ENCODE measurements at regions of chr4 and their contacts with region 1.

Region 1: DNA sequence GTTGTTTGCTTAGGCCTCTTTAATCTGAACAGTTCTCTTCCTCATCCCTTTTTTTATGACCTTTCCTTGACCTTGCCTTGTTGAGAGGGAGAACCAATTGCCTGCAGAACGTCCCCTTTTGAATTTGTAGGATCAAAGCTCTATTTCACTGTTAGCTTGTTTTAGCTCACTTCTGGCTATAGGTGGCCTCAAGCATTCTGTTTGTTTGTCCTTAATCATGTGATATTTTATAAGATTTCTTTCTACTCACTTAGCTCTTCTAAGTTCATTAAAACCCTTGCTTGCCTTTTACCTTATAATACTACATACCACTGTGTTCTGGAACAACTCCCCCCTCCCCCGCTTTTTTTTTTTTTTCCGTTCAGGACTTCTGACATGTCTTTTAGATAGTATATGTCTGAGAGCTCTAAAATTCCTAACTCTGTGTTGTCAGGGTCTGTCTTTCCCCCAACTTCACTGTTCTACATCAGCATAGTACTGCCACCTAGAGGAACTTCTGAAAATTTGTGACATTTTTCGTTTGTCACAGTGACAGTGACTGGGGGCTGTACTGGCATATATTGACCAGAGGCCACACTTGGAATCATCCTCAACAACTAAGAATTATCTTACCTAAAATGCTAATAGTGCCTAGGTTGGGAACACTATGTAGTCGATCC is 128.5 kb downstream of the LARP7 start:
- DNase-seq: peak; percentile 7
- ATAC-seq: peak; percentile 91
- H3K4me3 ChIP-seq: no peak overlapping the region
- H3K27ac ChIP-seq: no peak overlapping the region
- H3K4me1 ChIP-seq: no peaks in the 10 kb centered on the region; the same call in 1 of the 2 replicates
- H3K27me3 ChIP-seq: no peaks in the 10 kb centered on the region
- CTCF ChIP-seq: peak; percentile 49 to 58 (median 56); a peak in 5 of 6 replicates
- EP300 ChIP-seq: no peak
- POLR2A ChIP-seq: no peak
- RAD21 ChIP-seq: peak; percentile 67

Region 2: DNA sequence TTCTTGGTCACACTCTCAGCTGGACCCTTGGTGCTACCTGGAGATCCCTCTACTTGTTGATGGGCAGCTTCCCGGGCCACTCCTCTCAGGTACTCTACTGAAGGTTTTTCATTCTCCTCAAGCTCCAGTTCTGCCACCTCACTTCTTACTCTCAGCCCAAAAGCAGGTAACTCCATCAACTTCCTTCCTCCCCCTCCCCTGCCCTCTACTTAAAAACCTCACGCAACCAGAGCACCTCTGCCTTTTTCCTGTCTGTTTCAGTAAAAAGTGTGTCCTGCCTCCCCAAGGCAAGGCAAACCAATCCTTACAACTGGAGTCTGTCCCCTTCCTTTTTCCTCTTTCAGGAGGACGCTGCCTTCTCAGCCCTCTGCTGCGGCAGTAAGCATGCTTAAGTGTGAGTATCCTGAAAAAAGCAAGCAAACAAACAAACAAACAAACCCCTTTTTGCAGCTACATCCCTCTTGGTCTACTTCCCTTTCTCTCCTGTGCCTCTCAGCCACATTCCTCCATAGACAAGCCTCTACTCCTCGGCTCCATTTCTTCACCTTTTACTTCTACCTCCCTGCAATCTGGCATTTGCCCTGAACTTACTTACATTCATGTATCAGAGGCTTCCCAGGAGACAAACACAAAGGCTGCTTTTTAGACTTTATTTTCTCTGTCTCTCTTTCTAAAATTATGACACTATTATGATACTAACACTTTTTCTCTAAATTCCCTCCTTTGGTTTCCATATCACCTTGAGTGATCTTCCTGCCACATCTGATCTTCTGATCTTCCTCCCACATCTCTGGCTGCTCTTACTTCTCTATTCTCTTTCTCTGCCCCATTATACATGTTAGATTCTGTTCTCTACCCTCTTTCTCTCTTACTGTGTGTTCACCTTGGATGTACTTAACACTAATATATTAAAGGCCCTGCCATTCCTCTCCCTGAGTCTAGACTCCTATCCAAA is 462.8 kb before region 1 on chr4:
- CTCF ChIA-PET with region 1: no interaction called
- POLR2A ChIA-PET with region 1: no interaction called
- RAD21 ChIA-PET with region 1: no interaction called
- SMC1A ChIA-PET with region 1: no interaction called
- in situ Hi-C with region 1: no loop called
- intact Hi-C with region 1: no loop called
- DNase-seq: no peak
- ATAC-seq: peak; percentile 83
- H3K4me3 ChIP-seq: no peak overlapping the region; the same call in 1 of the 2 replicates
- H3K27ac ChIP-seq: peak overlapping the region; percentile 67
- H3K4me1 ChIP-seq: peaks cover 17% of the 10 kb centered on the region
- H3K27me3 ChIP-seq: no peaks in the 10 kb centered on the region
- CTCF ChIP-seq: no peak
- EP300 ChIP-seq: no peak
- POLR2A ChIP-seq: no peak
- RAD21 ChIP-seq: no peak

Region 3: GRCh38 chr4:112321776-112322684 is 443.4 kb before region 1 on chr4:
- CTCF ChIA-PET with region 1: interaction called, 22 read pairs
- POLR2A ChIA-PET with region 1: no interaction called
- RAD21 ChIA-PET with region 1: no interaction called
- SMC1A ChIA-PET with region 1: interaction called, 9 read pairs
- in situ Hi-C with region 1: loop called (anchors 5 kb)
- intact Hi-C with region 1: no loop called
- DNase-seq: no peak
- ATAC-seq: peak; percentile 44
- H3K4me3 ChIP-seq: no peak overlapping the region
- H3K27ac ChIP-seq: no peak overlapping the region
- H3K4me1 ChIP-seq: peaks cover 29% of the 10 kb centered on the region
- H3K27me3 ChIP-seq: no peaks in the 10 kb centered on the region
- CTCF ChIP-seq: peak; percentile 76 to 87 (median 77)
- EP300 ChIP-seq: no peak
- POLR2A ChIP-seq: no peak
- RAD21 ChIP-seq: peak; percentile 80

Region 4: GRCh38 chr4:112636688-112637551 is 128.5 kb before region 1 on chr4 and contains the starts of genes LARP7 and ZGRF1:
- CTCF ChIA-PET with region 1: interaction called, 205 read pairs
- POLR2A ChIA-PET with region 1: no interaction called
- RAD21 ChIA-PET with region 1: interaction called, 15 read pairs
- SMC1A ChIA-PET with region 1: interaction called, 46 read pairs
- in situ Hi-C with region 1: loop called (anchors 5 kb)
- intact Hi-C with region 1: loop called (anchors 1 kb)
- DNase-seq: peak; percentile 96
- ATAC-seq: peak; percentile 94
- H3K4me3 ChIP-seq: peak within 1 kb of the TSS; percentile 87
- H3K27ac ChIP-seq: peak within 1 kb of the TSS; percentile 98
- H3K4me1 ChIP-seq: peaks cover 20% of the 10 kb centered on the region
- H3K27me3 ChIP-seq: no peaks in the 10 kb centered on the region
- CTCF ChIP-seq: peak; percentile 86 to 96 (median 95)
- EP300 ChIP-seq: peak in 1 of 2 experiments; percentile 32; a peak in 2 of 4 replicates
- POLR2A ChIP-seq: peak; percentile 77
- RAD21 ChIP-seq: peak; percentile 50
- polyA plus RNA-seq, gene LARP7: 79.0 to 107 TPM
- polyA plus RNA-seq, gene ZGRF1: 8.5 to 9.0 TPM

Region 5: DNA sequence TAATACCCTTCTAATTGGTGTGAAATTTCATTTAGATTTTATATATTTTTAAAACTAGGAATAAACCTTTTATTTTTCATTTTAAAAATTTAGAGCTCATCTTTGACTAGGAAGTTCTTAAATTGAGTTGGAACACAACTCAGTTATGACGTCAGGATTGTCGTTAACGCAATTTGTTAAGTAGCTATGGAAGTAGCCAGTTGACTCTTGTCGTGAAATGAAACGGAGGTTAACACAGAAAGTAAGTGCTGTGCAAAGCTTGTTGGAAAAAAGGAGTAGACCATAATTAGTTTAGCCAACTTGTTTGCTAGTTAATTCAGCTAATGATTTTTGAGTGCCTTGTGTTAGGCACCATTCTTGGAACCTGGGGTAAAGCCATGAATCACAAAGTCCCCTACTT is 110.2 kb before region 1 on chr4:
- CTCF ChIA-PET with region 1: interaction called, 21 read pairs
- POLR2A ChIA-PET with region 1: no interaction called
- RAD21 ChIA-PET with region 1: interaction called, 4 read pairs
- SMC1A ChIA-PET with region 1: interaction called, 6 read pairs
- in situ Hi-C with region 1: no loop called
- intact Hi-C with region 1: no loop called
- DNase-seq: no peak
- ATAC-seq: no peak
- H3K4me3 ChIP-seq: no peak overlapping the region
- H3K27ac ChIP-seq: no peak overlapping the region
- H3K4me1 ChIP-seq: no peaks in the 10 kb centered on the region
- H3K27me3 ChIP-seq: no peaks in the 10 kb centered on the region
- CTCF ChIP-seq: no peak
- EP300 ChIP-seq: no peak
- POLR2A ChIP-seq: no peak
- RAD21 ChIP-seq: no peak

Region 6: DNA sequence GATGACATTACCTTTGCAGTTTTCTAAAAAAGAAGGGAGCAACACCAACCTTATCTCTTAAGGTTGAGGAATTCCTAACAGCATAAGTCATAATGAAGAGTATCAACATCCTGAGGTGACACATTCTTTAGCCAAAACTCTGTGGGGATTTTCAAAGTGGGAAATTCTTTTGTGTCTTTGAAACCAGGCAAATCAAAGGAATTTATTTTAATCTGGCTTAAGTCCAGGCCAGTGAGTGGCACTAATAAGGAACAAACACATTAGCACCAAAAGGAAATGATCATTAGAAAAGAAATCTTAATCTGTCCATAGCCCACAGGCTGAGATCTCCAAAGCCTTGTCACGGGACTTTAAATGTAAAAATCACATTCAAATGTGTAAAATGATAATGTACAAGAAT is 18.4 kb before region 1 on chr4:
- CTCF ChIA-PET with region 1: interaction called, 22 read pairs
- POLR2A ChIA-PET with region 1: no interaction called
- RAD21 ChIA-PET with region 1: interaction called, 7 read pairs
- SMC1A ChIA-PET with region 1: interaction called, 4 read pairs
- in situ Hi-C with region 1: no loop called
- intact Hi-C with region 1: no loop called
- DNase-seq: no peak
- ATAC-seq: no peak
- H3K4me3 ChIP-seq: no peak overlapping the region
- H3K27ac ChIP-seq: no peak overlapping the region
- H3K4me1 ChIP-seq: no peaks in the 10 kb centered on the region
- H3K27me3 ChIP-seq: no peaks in the 10 kb centered on the region
- CTCF ChIP-seq: no peak
- EP300 ChIP-seq: no peak
- POLR2A ChIP-seq: no peak
- RAD21 ChIP-seq: no peak

Region 7: DNA sequence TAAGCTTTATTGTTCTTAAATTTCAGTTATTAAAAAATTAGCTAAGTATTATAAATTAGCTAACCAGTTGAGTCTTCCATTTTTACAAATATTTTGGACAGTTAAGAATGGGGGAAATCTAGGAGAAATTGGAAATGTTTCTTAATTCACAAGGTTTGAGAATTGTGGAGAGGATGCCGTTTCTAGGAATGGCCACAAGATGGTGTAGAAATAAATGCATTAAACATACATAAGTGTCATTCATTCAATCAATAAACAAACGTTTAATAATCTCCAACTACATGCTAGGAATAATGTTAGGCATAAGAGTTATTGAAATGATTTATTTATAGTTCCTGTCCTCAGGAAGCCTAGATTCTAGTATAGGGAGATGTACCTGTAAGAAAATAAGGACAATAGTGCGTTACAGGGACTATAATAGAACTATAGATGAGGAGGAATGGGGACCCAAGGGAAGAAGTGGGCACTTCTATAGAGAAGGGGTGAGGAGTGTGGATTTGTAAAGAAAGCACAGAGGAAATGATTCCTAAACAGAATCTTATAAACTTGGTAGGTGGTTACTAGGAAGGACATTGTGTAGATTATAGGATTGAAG is 88.3 kb after region 1 on chr4:
- CTCF ChIA-PET with region 1: interaction called, 13 read pairs
- POLR2A ChIA-PET with region 1: no interaction called
- RAD21 ChIA-PET with region 1: no interaction called
- SMC1A ChIA-PET with region 1: interaction called, 4 read pairs
- in situ Hi-C with region 1: no loop called
- intact Hi-C with region 1: no loop called
- DNase-seq: no peak
- ATAC-seq: no peak
- H3K4me3 ChIP-seq: no peak overlapping the region
- H3K27ac ChIP-seq: no peak overlapping the region
- H3K4me1 ChIP-seq: no peaks in the 10 kb centered on the region
- H3K27me3 ChIP-seq: no peaks in the 10 kb centered on the region
- CTCF ChIP-seq: peak; percentile 24 to 44 (median 40); a peak in 4 of 6 replicates
- EP300 ChIP-seq: no peak
- POLR2A ChIP-seq: no peak
- RAD21 ChIP-seq: peak; percentile 52; the same call in 1 of the 2 replicates

Region 8: DNA sequence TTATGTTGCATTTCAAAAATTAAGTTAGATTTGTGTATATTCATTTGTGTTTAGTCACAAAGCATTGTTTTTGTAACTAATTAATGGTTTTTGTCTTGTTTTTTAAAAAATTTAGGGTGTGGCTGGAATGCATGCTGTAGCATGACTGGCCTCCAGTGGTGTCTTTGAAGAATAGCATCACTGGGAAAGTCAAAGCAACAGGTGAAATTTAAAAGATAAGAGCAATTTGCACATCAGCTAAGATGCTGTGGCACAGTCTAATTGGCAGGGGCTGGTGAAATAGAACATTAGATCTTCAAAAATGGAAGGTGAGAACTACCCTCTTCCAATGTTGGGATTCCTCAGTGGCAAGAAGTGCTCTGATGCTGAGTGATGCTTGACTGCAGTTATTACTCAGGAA is 329.4 kb after region 1 on chr4:
- CTCF ChIA-PET with region 1: interaction called, 9 read pairs
- POLR2A ChIA-PET with region 1: no interaction called
- RAD21 ChIA-PET with region 1: no interaction called
- SMC1A ChIA-PET with region 1: interaction called, 3 read pairs
- in situ Hi-C with region 1: no loop called
- intact Hi-C with region 1: loop called (anchors 2 kb)
- DNase-seq: no peak
- ATAC-seq: peak; percentile 53; the same call in 2 of the 3 replicates
- H3K4me3 ChIP-seq: no peak overlapping the region
- H3K27ac ChIP-seq: no peak overlapping the region
- H3K4me1 ChIP-seq: no peaks in the 10 kb centered on the region
- H3K27me3 ChIP-seq: no peaks in the 10 kb centered on the region
- CTCF ChIP-seq: peak; percentile 62 to 68 (median 64); a peak in 5 of 6 replicates
- EP300 ChIP-seq: no peak
- POLR2A ChIP-seq: no peak
- RAD21 ChIP-seq: peak; percentile 76

Measured in GM12878 (cell line).